Psoas muscle (tissue), 8 donors: ENCODE measurements at regions of chr1 and their contacts with region 1.

Region 1: DNA sequence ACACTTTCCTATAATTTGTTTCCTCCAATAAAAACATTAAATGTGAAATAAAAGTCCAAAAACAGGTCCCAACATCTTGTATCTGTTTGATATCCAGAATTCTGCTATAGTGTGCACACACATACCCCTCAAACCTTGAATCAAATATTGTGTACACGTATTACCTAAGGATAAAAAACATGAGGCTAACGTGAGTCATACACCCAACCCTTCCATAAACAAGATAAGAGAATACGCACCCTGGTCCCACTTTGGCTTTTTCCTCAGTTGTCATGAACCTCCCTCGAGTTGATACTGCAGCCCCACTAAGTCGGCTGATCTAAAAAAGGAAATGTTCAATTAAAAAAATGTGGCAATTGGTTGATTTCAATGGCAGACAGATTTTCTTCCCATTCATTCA is 5.2 kb downstream of the KHDC4 start:
- DNase-seq: no peak
- ATAC-seq: no peak
- H3K4me3 ChIP-seq: no peak overlapping the region
- H3K27ac ChIP-seq: no peak overlapping the region
- H3K4me1 ChIP-seq: peaks cover 36% of the 10 kb centered on the region
- H3K27me3 ChIP-seq: no peaks in the 10 kb centered on the region
- CTCF ChIP-seq: no peak

Region 2: GRCh38 chr1:155776404-155776803 is 152.7 kb before region 1 on chr1:
- intact Hi-C with region 1: loop called in 1 of 2 experiments (anchors 10 kb)
- DNase-seq: peak; percentile 31 to 61
- ATAC-seq: peak in 1 of 4 donors; percentile 47
- H3K4me3 ChIP-seq: no peak overlapping the region
- H3K27ac ChIP-seq: no peak overlapping the region
- H3K4me1 ChIP-seq: no peaks in the 10 kb centered on the region
- H3K27me3 ChIP-seq: no peaks in the 10 kb centered on the region
- CTCF ChIP-seq: no peak